Panc1 (cell line): ENCODE measurements at regions of chr4 and their contacts with region 1.

Region 1: DNA sequence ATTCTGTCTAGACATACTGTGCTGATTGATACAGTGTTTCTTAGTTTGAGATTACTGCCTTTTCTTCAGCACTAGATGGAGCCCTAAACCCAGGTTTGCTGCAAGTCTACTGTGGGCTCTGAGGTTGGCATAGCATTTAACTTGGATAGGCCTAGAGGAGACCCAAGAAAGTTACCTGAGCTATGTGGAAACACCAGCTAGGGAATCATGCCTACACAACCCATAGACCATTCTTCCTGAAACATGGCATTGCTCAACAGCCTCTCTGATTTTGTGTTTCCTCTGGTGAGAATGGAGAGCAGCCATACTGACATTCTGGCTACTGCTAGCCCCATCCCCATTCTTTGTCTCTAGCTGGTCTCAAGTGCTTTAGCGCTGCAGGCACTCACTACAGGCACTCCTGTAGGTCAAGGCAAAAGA is 287.7 kb upstream of the PCDH18 start:
- DNase-seq: peak; percentile 12
- ATAC-seq: peak; percentile 86
- H3K4me3 ChIP-seq: no peak overlapping the region
- H3K27ac ChIP-seq: no peak overlapping the region
- H3K4me1 ChIP-seq: no peaks in the 10 kb centered on the region
- H3K27me3 ChIP-seq: no peaks in the 10 kb centered on the region
- CTCF ChIP-seq: peak; percentile 61

Region 2: DNA sequence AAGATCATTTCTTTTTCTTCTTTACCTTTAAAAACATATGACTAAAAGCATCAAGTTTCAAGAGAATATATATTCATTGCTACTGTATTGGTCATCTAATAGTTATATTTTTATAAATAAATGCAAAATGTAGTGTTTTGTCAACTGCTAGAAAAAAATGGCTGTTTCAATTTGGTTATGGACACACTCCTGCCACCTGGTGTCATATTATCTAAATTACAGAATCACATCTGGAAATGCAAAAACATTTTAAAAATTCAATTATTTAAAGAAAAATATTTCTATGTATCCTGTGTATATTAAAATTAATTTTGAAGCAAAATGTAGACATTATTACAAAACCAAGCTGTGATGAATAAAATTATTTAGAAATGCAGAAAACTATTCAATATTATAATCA is 41.7 kb after region 1 on chr4:
- CTCF ChIA-PET with region 1: no interaction called
- POLR2A ChIA-PET with region 1: no interaction called
- in situ Hi-C with region 1: no loop called
- intact Hi-C with region 1: loop called (anchors 5 kb)
- DNase-seq: no peak
- ATAC-seq: no peak
- H3K4me3 ChIP-seq: no peak overlapping the region
- H3K27ac ChIP-seq: no peak overlapping the region
- H3K4me1 ChIP-seq: no peaks in the 10 kb centered on the region
- H3K27me3 ChIP-seq: no peaks in the 10 kb centered on the region
- CTCF ChIP-seq: no peak

Region 3: DNA sequence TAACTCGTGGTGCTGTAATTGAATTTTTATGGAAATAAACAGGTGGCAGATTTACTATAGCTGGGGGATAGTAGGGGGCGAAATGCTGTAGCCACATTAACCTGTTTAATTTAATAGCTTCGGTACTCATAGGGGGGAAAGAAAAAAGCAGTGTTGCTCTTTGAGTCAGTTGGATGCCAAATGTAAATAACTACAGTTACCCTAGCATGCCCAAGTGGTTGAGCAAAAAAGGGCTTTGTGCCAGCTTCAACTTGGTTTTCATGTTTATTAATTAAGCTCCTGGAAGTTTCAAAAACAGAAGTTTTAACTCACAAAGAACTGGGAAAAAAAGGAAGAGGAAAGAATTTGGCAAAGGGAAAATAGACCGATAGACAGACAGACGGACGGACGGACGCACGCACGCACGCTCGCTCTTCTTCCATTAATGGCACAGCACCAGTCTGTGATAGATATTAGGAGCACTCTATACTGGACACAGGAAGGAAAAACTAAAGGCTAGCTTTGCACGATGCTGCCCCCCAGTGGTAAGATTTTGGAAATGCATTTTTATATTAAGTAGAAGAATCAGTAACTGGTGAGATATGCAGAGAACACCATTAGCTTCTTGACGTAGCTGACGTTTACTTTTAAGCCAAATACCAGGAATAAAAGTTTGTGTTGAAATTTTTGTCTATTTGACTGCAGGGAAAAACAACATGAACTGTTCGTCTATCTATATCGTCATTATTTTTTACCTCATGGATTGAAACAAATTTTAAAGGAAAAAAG is 270.4 kb after region 1 on chr4:
- CTCF ChIA-PET with region 1: interaction called, 3 read pairs
- POLR2A ChIA-PET with region 1: no interaction called
- in situ Hi-C with region 1: no loop called
- intact Hi-C with region 1: loop called (anchors 2 kb)
- DNase-seq: peak; percentile 54
- ATAC-seq: peak; percentile 80
- H3K4me3 ChIP-seq: peak overlapping the region in 1 of 2 experiments; percentile 3; a peak in 1 of 4 replicates
- H3K27ac ChIP-seq: no peak overlapping the region
- H3K4me1 ChIP-seq: no peaks in the 10 kb centered on the region
- H3K27me3 ChIP-seq: no peaks in the 10 kb centered on the region
- CTCF ChIP-seq: peak; percentile 77

Region 4: GRCh38 chr4:138182838-138183426 is 363.0 kb after region 1 on chr4:
- CTCF ChIA-PET with region 1: no interaction called
- POLR2A ChIA-PET with region 1: no interaction called
- in situ Hi-C with region 1: no loop called
- intact Hi-C with region 1: loop called (anchors 5 kb)
- DNase-seq: no peak
- ATAC-seq: no peak
- H3K4me3 ChIP-seq: no peak overlapping the region
- H3K27ac ChIP-seq: no peak overlapping the region
- H3K4me1 ChIP-seq: no peaks in the 10 kb centered on the region
- H3K27me3 ChIP-seq: no peaks in the 10 kb centered on the region
- CTCF ChIP-seq: peak; percentile 54